ENCODE measurements at regions of chr20 and their contacts with region 1.

Region 1: DNA sequence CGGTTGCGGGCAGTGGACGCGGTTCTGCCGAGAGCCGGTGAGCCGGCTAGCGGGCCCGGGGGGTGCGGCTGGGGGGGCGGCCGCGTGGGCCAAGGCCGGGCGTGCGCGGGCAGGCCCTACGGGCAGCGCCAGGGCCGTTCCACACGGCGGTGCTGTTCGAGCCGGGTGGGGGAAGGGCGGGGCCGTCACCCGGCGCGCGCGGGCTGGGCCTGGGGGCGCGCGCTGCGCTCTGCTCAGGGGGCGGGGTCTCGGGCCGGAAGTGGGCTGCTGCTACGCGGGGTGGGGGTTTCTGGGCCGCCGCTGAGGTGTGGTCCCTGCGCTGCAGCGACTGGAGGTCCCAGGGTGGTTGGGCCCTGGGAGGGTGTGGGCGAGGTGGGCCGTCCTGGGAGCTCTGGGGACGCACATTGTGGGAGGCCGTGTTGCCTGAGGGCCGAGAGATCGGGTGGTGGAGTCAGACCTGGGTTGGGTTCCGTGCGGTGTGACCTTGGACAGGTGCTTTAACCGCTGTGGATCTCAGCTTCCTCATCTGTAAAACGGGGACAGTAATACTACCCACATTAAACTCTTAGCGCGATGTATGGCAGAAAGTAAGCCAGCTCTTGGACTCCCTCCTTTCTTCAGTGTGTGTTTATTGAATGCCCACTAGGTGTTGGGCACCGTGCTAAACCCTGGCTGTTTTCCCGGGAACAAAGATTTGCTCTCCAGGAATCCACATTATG is 397 bp downstream of the MAPRE1 start:
- DNase-seq: peak in 1 of 2 experiments; percentile 93
- H3K4me3 ChIP-seq: peak overlapping the region; percentile 75 to 96 (median 85)
- H3K27ac ChIP-seq: peak overlapping the region; percentile 96
- H3K4me1 ChIP-seq: peaks cover 0 to 12% (median 4%) of the 10 kb centered on the region in 4 experiments
- H3K27me3 ChIP-seq: peaks cover 0 to 2% (median 0%) of the 10 kb centered on the region in 4 experiments; a peak in 1 of 7 replicates
- CTCF ChIP-seq: no peak
- EP300 ChIP-seq: no peak
- POLR2A ChIP-seq: peak; percentile 56 to 90
- RAD21 ChIP-seq: no peak

Region 2: DNA sequence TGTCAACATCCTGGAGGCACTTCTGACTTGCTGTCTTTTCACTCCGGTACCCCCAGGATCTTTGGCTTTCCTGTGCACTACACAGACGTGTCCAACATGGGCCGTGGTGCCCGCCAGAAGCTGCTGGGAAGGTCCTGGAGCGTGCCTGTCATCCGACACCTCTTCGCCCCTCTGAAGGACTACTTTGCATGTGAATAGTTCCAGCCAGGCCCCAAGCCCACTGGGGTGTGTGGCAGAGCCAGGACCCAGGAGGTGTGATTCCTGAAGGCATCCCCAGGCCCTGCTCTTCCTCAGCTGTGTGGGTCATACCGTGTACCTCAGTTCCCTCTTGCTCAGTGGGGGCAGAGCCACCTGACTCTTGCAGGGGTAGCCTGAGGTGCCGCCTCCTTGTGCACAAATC is 12.4 kb before region 1 on chr20:
- CTCF ChIA-PET with region 1: interaction called, 3 read pairs
- POLR2A ChIA-PET with region 1: interaction called, 51 read pairs
- DNase-seq: peak in 1 of 2 experiments; percentile 73
- H3K4me3 ChIP-seq: no peak overlapping the region
- H3K27ac ChIP-seq: 0 out of 2 replicates have a peak overlapping the region, but pooled peaks have one; percentile 36
- H3K4me1 ChIP-seq: peaks cover 8 to 33% (median 25%) of the 10 kb centered on the region in 4 experiments
- H3K27me3 ChIP-seq: no peaks in the 10 kb centered on the region
- CTCF ChIP-seq: no peak
- EP300 ChIP-seq: no peak
- POLR2A ChIP-seq: peak in 1 of 2 experiments; percentile 44; a peak in 1 of 3 replicates
- RAD21 ChIP-seq: no peak

Region 3: GRCh38 chr20:32830437-32830836 is 10.3 kb after region 1 on chr20:
- CTCF ChIA-PET with region 1: interaction called, 3 read pairs
- POLR2A ChIA-PET with region 1: interaction called, 15 read pairs
- DNase-seq: no peak
- H3K4me3 ChIP-seq: no peak overlapping the region
- H3K27ac ChIP-seq: no peak overlapping the region
- H3K4me1 ChIP-seq: no peaks in the 10 kb centered on the region
- H3K27me3 ChIP-seq: no peaks in the 10 kb centered on the region
- CTCF ChIP-seq: no peak
- EP300 ChIP-seq: no peak
- POLR2A ChIP-seq: no peak
- RAD21 ChIP-seq: no peak

Measured in H1 (cell line).